ENCODE measurements at regions of chr11 and their contacts with region 1.

Region 1: GRCh38 chr11:112289588-112290492 is 29.2 kb upstream of the PLET1 start:
- DNase-seq: peak; percentile 83
- H3K4me3 Mint-ChIP-seq: peak overlapping the region; percentile 67
- H3K27ac Mint-ChIP-seq: no peak overlapping the region
- H3K4me1 Mint-ChIP-seq: peaks cover 20% of the 10 kb centered on the region
- H3K27me3 Mint-ChIP-seq: no peaks in the 10 kb centered on the region

Region 2: GRCh38 chr11:112174789-112175598 is 114.8 kb before region 1 on chr11 and contains the start of gene BCO2:
- CTCF ChIA-PET with region 1: no interaction called
- intact Hi-C with region 1: no loop called
- DNase-seq: peak; percentile 60
- H3K4me3 Mint-ChIP-seq: peak within 1 kb of the TSS; percentile 50
- H3K27ac Mint-ChIP-seq: no peak within 1 kb of the TSS
- H3K4me1 Mint-ChIP-seq: peaks cover 13% of the 10 kb centered on the region
- H3K27me3 Mint-ChIP-seq: peaks cover 22% of the 10 kb centered on the region
- total RNA-seq, gene BCO2: 0.30 to 0.45 TPM

Region 3: DNA sequence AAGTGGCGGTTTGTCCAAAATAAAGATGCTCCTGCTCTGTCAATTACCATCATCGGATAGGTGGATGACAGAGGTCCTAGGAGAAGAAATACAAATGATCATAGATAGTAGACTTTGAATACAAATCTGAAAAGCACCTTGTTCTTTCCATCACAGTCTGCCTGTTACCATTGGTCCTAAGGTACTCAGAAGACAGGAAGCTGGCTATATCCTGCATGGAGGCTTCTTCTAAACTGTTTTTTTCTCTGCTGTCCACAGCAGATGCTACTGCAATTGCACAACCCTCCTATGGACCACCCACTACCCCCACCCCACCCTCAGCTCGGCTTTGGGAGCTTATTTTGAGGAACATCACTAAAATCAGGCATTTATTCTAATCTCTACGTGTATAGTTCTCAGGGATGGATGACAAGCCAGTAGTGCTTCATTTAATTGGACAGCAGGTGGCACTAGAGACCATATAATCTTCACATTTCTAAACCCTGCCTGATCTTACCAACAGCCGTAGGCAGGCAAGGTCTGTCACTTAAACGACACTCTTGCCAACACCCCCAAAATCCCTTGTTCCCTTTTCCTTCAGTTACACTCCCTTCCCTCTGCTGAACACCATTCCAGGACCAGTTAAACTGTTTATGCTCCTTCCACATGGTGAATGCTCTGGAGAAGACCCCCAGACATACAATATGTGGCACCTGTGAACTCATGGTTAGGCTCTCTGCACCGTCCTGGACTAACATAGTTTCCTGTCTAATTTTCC is 70.2 kb before region 1 on chr11:
- CTCF ChIA-PET with region 1: interaction called, 19 read pairs
- intact Hi-C with region 1: no loop called
- DNase-seq: peak; percentile 48
- H3K4me3 Mint-ChIP-seq: no peak overlapping the region
- H3K27ac Mint-ChIP-seq: no peak overlapping the region
- H3K4me1 Mint-ChIP-seq: no peaks in the 10 kb centered on the region
- H3K27me3 Mint-ChIP-seq: no peaks in the 10 kb centered on the region

Region 4: DNA sequence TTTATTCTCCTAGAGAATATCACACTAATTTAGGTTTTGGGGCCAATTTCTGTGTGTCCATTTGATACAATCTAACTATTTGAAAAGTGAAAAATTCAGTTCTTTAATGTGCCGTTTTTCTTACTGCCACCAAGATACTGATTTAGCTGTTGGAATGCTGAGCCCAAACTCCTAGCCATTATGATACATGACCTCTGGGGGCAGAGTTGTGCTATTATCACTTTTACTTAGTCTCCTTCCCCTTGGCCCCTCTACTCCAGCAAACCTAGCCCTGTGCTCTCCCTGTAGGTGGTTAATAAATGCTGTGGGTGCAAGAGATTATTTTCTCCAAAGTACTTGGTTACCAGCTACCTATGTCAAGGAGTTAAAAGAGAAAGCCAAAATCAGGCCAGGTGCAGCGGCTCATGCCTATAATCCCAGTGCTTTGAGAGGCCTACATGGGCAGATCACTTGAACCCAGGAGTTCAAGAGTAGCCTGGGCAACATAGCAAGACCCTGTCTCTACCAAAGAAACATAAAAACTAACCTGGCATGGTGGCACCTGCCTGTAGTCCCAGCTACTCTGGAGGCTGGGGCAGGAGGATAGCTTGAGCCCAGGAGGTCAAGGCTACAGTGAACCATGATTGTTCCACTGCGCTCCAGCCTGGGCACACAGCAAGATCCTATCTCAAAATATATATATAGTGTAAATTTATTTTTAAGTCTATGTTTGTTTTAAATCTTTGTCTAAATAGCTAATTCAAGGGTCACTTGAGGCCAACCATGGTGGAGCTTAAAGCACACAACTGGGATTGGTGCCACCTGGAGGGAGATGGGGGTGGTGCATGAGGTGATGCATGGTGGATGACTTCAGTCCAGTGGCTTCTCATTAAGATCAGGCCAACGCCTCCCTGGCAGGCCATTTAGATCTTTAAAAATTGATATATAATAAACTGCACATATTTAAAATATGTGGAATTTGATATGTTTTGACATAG is 164.0 kb after region 1 on chr11:
- CTCF ChIA-PET with region 1: interaction called, 31 read pairs
- intact Hi-C with region 1: loop called (anchors 1 kb)
- DNase-seq: peak; percentile 62
- H3K4me3 Mint-ChIP-seq: no peak overlapping the region
- H3K27ac Mint-ChIP-seq: no peak overlapping the region
- H3K4me1 Mint-ChIP-seq: peaks cover 5% of the 10 kb centered on the region
- H3K27me3 Mint-ChIP-seq: no peaks in the 10 kb centered on the region

Region 5: GRCh38 chr11:112588252-112588694 is 298.4 kb after region 1 on chr11:
- CTCF ChIA-PET with region 1: interaction called, 5 read pairs
- intact Hi-C with region 1: loop called (anchors 1 kb)
- DNase-seq: peak; percentile 58
- H3K4me3 Mint-ChIP-seq: no peak overlapping the region
- H3K27ac Mint-ChIP-seq: no peak overlapping the region
- H3K4me1 Mint-ChIP-seq: no peaks in the 10 kb centered on the region
- H3K27me3 Mint-ChIP-seq: no peaks in the 10 kb centered on the region

Region 6: DNA sequence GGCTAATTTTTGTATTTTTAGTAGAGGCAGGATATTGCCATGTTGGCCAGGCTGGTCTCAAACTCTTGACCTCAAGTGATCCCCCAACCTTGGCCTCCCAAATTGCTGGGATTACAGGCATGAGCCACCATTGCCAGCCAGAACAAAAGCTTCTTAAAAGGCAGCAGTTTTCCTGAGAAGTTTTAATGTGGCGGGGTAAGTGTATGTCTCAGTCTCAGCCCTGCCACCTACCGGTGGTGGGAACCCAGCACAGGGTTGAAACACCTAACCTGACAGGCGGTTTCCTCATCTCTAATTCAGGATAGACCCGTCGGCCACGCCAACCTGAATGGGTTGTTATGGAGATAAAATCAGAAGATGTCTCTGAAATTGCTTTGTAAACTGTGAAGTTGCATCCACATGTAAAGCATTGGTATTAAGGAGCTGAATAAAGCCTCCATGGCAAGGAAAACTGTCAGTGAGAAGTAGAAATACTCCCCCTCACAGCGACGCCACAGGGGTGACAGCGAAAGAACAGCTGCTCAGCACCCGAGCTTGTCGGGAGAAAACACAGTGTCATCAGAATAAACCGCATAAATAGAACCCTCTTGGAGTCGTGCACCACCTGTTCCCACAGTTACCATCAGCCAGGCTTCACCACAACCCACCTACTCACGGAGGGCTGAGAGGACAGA is 505.4 kb after region 1 on chr11:
- CTCF ChIA-PET with region 1: interaction called, 3 read pairs
- intact Hi-C with region 1: loop called (anchors 5 kb)
- DNase-seq: peak; percentile 55
- H3K4me3 Mint-ChIP-seq: no peak overlapping the region
- H3K27ac Mint-ChIP-seq: no peak overlapping the region
- H3K4me1 Mint-ChIP-seq: peaks cover 4% of the 10 kb centered on the region
- H3K27me3 Mint-ChIP-seq: peaks cover 2% of the 10 kb centered on the region

Measured in activated naive CD4-positive, alpha-beta T cell treated with anti-CD3 and anti-CD28 coated beads for 36 hours (primary cell).